ENCODE measurements at regions of chr5 and their contacts with region 1.

Region 1: GRCh38 chr5:134195666-134196065 is 18.9 kb upstream of the SKP1 start:
- DNase-seq: no peak
- CTCF ChIP-seq: no peak

Region 2: GRCh38 chr5:134209477-134210240 is 14.0 kb after region 1 on chr5:
- CTCF ChIA-PET with region 1: interaction called, 13 read pairs
- POLR2A ChIA-PET with region 1: interaction called, 3 read pairs
- DNase-seq: no peak
- CTCF ChIP-seq: no peak